BJ (cell line): ENCODE measurements at regions of chr9 and their contacts with region 1.

Region 1: DNA sequence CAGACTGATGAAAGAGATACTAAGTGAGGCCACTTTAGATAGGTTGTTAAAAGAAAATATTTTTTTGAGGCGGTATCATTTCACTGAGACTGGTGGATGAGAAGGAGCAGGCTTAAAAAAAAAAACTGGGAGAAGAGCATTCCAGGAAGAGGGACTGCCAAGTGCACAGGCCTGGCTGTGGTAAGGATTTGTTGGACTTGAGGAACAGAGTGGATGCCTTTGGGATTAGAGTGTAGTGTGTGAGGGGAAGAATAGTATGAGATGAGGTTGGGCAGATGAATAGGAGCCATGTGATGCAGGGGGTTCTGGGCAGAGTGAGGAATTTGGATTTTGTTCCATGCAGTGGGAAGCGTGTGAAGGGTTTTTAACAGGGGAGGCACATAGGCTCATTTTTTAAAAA is 57.9 kb downstream of the PBX3 start:
- DNase-seq: peak; percentile 52
- H3K4me3 ChIP-seq: no peak overlapping the region
- H3K27me3 ChIP-seq: no peaks in the 10 kb centered on the region
- CTCF ChIP-seq: no peak

Region 2: DNA sequence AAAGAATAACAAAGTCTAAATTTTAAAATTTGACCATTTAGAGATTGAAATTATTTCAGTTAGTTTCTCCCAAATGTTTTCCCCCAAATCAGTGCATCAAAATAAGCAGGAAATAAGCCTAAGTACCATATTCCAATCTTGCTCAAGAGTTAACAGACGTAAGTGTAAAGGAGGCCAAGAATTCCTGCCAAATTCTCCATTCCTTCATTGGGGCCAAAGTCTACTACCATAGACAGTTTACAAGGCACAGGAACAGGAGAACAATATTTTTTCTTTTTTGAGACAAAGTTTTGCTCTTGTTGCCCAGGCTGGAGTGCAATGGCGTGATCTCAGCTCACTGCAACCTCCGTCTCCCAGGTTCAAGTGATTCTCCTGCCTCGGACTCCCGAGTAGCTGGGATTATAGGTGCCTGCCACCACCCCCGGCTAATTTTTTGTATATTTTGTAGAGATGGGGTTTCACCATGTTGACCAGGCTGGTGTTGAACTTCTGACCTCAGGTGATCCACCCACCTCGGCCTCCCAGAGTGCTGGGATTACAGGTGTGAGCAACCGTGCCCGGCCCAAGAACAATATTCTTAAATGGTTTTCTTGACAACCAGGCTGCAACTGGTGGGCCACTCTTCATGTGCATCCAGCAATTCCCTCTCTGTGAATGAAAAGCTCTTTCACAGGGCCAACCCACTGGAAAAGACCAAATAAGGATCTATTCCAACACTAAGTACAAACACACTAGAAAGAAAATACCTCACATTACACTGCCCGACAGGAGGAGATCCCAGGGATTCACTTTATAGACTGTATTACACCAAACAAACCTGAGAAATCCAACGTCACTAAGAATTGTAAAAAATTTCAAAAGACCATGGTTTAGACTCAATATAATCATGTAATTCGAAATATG is 225.8 kb before region 1 on chr9:
- CTCF ChIA-PET with region 1: no interaction called
- POLR2A ChIA-PET with region 1: no interaction called
- DNase-seq: no peak
- H3K4me3 ChIP-seq: no peak overlapping the region
- H3K27me3 ChIP-seq: no peaks in the 10 kb centered on the region
- CTCF ChIP-seq: no peak

Region 3: GRCh38 chr9:125829743-125830142 is 24.7 kb after region 1 on chr9:
- CTCF ChIA-PET with region 1: interaction called, 3 read pairs
- POLR2A ChIA-PET with region 1: interaction called, 10 read pairs
- DNase-seq: no peak
- H3K4me3 ChIP-seq: no peak overlapping the region
- H3K27me3 ChIP-seq: no peaks in the 10 kb centered on the region
- CTCF ChIP-seq: no peak